Body of pancreas (tissue), 4 donors: ENCODE measurements at regions of chr15 and their contacts with region 1.

Region 1: GRCh38 chr15:93030430-93031105 is 58.4 kb downstream of the RGMA start:
- DNase-seq: peak; percentile 74 to 81 (median 80)
- ATAC-seq: peak; percentile 80
- H3K4me3 ChIP-seq: no peak overlapping the region
- H3K27ac ChIP-seq: no peak overlapping the region
- H3K4me1 ChIP-seq: peaks cover 34% of the 10 kb centered on the region
- H3K27me3 ChIP-seq: no peaks in the 10 kb centered on the region
- CTCF ChIP-seq: peak; percentile 73 to 93 (median 87)
- POLR2A ChIP-seq: no peak

Region 2: GRCh38 chr15:92797168-92797951 is 233.2 kb before region 1 on chr15:
- intact Hi-C with region 1: loop called (anchors 10 kb)
- DNase-seq: peak; percentile 37 to 84 (median 52)
- ATAC-seq: peak; percentile 92
- H3K4me3 ChIP-seq: no peak overlapping the region
- H3K27ac ChIP-seq: peak overlapping the region in 2 of 4 donors; percentile 15 to 44
- H3K4me1 ChIP-seq: peaks cover 4% of the 10 kb centered on the region
- H3K27me3 ChIP-seq: no peaks in the 10 kb centered on the region
- CTCF ChIP-seq: peak; percentile 45 to 90 (median 84)
- POLR2A ChIP-seq: no peak

Region 3: DNA sequence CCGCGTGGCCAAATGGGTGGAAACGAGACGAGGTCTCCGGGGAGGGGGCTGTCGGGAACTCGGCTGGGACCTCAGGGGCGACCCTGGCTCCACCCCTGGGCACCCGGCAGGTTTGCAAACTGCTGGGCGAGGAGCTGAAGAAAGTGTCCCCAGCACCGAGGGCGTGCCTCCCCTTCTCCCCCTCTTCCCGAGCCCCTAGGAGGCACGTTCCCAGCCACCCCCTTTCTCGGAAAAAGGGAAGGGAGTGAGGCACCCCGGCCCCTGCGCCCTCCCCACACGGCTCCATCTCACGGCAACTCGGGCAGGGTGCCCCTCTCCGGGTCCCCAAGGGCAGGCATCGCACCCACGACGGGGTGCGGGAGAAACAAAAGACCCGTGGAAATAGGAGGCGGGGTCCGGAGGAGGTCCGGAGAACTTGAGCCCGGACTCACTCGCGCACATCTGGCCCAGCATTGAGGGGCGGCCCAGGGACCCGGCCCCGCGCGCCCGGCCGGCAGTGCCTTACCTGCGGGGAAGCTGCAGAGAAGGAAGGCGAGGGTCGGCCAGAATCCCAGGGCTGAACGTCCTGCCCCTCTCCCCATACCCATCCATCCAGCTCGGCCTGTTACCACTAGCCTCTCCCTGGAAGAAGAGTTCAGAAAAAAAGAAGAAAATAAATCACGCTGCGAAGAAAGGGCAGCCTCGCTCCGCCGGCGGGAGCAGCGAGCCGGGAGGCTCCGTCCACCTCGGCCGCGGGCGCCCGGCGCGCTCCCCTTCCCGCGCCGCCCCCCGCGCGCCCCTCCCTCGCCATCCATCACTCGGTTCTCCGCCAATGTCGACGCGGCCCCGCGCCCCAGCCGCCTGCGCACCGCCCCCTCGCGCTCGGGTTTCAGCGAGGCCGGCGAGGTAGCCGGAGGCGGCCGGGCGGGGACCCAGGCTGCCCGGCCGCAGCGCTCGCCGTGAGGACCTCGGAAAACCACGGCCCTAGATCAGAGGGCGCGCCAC is 42.1 kb after region 1 on chr15:
- intact Hi-C with region 1: no loop called
- DNase-seq: peak; percentile 77 to 90 (median 82)
- ATAC-seq: peak; percentile 94
- H3K4me3 ChIP-seq: peak overlapping the region; percentile 45 to 70
- H3K27ac ChIP-seq: peak overlapping the region; percentile 35 to 83 (median 75)
- H3K4me1 ChIP-seq: peaks cover 14% of the 10 kb centered on the region
- H3K27me3 ChIP-seq: no peaks in the 10 kb centered on the region
- CTCF ChIP-seq: peak in 2 of 7 experiments; percentile 30
- POLR2A ChIP-seq: peak in 2 of 3 donors; percentile 39 to 58

Region 4: DNA sequence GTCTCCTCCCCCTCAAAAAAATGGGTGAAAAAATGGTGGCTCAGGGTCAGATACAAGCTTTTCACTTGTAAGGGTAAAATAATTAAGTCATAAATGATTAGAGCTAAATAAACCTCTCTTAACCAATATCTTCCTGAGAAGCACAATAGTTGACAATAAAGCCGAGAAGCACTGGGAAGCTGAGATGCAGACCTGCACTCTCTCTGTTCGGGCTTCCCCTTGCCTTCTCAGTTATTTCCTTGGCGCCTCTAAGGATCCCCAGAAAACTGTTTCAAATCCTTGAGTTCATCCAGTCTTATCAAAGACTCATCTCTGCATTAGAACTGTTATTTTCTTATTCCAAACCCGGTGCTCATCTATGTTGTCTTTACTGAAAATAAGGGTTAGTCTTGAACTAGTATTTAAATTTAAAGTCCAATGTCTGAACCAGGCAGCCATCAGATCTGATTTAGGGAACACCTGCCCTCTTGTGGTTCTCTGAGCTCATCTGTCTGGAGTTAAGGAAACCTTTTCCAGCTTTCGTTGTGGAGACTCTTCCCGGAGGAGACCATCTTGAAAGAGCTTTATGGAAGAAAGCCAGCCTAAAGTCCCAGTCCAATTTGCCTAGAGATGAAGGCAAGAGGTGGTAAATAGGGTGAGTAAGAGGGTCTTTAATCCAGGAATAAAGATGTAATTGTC is 944.4 kb after region 1 on chr15:
- intact Hi-C with region 1: loop called (anchors 10 kb)
- DNase-seq: peak; percentile 23 to 47 (median 44)
- ATAC-seq: peak; percentile 64
- H3K4me3 ChIP-seq: no peak overlapping the region
- H3K27ac ChIP-seq: no peak overlapping the region
- H3K4me1 ChIP-seq: no peaks in the 10 kb centered on the region
- H3K27me3 ChIP-seq: no peaks in the 10 kb centered on the region
- CTCF ChIP-seq: peak; percentile 30 to 67 (median 57)
- POLR2A ChIP-seq: no peak

Region 5: DNA sequence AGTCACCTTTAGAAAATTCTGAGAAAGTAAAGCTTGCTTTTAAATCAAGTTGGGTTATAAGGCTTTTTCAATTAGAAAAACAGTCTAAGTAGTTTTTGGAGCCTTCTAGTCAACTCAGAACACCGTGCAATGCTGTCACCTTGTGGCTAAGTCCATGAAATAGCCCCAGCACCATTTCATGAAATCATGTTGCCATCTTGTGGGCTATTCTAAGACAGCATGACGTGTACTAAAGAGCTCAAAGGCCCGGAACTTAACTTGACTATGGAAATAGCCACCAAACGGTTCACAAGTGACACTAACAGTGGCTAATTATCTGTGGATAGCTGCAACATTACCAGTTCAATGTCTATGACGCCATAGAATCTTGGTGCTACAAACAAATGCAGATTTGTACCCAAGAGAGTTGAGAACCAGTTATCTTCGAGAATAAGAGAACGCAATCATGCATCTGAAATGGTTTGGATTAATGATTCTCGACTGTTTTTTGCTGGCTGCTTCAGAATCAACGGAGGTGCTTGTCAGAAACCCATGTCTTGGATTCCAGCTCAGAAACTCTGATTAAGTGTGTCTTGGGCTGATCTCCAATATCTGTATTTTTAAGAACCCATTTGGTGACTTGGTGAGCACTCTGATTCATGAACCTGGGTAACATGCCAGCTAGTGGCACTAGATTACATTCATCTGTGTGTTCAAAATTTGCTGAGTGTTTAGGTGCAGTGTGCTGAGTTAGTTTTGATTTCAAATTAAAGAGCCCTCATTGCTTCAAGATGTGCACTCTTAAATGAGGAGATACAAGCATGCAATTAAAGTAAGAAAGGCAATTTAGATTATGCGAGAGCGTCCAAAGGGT is 1089.6 kb after region 1 on chr15:
- intact Hi-C with region 1: loop called (anchors 5 kb)
- DNase-seq: peak; percentile 69 to 86 (median 76)
- ATAC-seq: peak; percentile 98
- H3K4me3 ChIP-seq: no peak overlapping the region
- H3K27ac ChIP-seq: no peak overlapping the region
- H3K4me1 ChIP-seq: no peaks in the 10 kb centered on the region
- H3K27me3 ChIP-seq: no peaks in the 10 kb centered on the region
- CTCF ChIP-seq: peak; percentile 67 to 99 (median 99)
- POLR2A ChIP-seq: no peak